Activated CD4-positive, alpha-beta memory T cell treated with anti-CD3 and anti-CD28 coated beads, Interleukin-2, amount 10 ng/mL, durations not matched to agents 7 days and 5 days (primary cell): ENCODE measurements at regions of chr20 and their contacts with region 1.

Region 1: DNA sequence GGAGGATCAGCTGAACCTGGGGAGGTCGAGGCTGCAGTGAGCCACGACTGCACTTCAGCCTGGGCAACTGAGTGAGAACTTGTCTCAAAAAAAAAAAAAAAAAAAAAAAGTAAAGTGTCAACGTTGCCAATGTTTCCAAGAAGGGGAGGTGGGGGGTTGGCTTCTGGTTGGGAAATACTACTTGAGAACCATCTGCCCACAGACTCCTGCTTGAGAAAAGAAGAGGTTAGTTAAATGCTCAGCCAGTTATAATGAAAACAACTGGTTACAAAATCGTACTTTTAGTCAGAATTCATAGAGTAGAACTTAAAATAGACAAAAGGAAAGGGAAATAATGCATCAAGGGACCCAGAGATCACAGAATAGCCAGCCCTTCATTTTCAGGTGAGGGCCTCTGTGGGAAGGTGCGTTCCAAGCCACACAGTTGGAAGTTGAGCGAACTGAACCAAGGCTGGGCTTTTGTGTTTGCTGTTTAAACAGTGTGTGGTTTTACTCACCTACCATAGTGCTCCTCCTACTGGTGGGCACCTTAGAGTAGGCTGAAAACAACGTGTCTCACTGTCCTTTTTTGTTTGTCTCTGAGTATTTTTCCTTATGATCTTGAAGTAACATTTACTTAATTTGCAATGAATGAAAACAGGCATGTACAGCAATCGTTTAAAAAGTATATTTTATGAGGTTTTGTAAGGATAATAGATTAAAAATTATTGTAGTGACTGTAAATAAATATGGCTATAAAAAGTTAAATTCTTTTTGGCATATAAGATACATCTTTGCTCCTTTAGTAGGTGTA is 200.7 kb downstream of the BCAS1 start:
- DNase-seq: peak; percentile 76
- H3K4me3 Mint-ChIP-seq: peak overlapping the region; percentile 22
- H3K27ac Mint-ChIP-seq: peak overlapping the region; percentile 84
- H3K4me1 Mint-ChIP-seq: peaks cover 79% of the 10 kb centered on the region
- H3K27me3 Mint-ChIP-seq: no peaks in the 10 kb centered on the region

Region 2: DNA sequence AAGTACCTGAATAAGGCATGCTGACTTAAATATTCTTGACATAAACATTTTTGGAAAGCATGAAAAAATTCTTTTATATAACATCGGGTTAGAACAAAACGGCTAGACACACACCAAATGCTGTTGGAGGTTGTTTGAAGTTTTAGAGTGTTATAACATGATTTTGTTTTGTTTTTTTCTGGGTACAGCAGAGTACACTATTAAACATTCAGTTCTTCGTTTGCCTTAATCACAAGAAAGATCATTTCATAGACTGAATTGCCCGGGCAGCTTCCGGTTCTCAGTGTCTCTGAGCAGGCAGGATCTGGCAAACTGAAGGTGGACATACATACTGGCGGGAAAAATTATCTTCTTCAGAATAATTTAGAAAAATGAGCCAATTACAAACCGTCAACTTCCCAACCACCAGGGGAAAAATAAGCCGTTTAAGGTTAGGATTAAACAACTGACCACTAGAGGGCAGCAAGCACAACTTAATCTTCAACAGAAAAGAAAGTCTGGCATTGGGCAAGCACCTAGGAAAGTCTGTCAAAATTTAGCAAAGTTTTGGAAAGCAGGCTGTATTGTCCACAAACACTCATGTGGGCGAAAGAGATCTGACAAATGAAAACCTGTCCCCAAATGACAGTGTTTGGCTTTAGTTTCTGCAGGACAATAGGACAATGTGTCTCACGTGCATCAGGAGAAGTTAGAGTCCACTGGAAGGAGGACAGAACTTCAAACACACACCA is 291.0 kb before region 1 on chr20:
- CTCF ChIA-PET with region 1: interaction called, 12 read pairs
- POLR2A ChIA-PET with region 1: interaction called, 12 read pairs
- DNase-seq: peak; percentile 55
- H3K4me3 Mint-ChIP-seq: peak overlapping the region; percentile 78
- H3K27ac Mint-ChIP-seq: peak overlapping the region; percentile 80
- H3K4me1 Mint-ChIP-seq: peaks cover 92% of the 10 kb centered on the region
- H3K27me3 Mint-ChIP-seq: no peaks in the 10 kb centered on the region

Region 3: GRCh38 chr20:53623454-53624211 is 246.0 kb before region 1 on chr20:
- CTCF ChIA-PET with region 1: interaction called, 5 read pairs
- POLR2A ChIA-PET with region 1: interaction called, 15 read pairs
- DNase-seq: peak; percentile 51
- H3K4me3 Mint-ChIP-seq: peak overlapping the region; percentile 60
- H3K27ac Mint-ChIP-seq: peak overlapping the region; percentile 96
- H3K4me1 Mint-ChIP-seq: peaks cover 39% of the 10 kb centered on the region
- H3K27me3 Mint-ChIP-seq: no peaks in the 10 kb centered on the region

Region 4: DNA sequence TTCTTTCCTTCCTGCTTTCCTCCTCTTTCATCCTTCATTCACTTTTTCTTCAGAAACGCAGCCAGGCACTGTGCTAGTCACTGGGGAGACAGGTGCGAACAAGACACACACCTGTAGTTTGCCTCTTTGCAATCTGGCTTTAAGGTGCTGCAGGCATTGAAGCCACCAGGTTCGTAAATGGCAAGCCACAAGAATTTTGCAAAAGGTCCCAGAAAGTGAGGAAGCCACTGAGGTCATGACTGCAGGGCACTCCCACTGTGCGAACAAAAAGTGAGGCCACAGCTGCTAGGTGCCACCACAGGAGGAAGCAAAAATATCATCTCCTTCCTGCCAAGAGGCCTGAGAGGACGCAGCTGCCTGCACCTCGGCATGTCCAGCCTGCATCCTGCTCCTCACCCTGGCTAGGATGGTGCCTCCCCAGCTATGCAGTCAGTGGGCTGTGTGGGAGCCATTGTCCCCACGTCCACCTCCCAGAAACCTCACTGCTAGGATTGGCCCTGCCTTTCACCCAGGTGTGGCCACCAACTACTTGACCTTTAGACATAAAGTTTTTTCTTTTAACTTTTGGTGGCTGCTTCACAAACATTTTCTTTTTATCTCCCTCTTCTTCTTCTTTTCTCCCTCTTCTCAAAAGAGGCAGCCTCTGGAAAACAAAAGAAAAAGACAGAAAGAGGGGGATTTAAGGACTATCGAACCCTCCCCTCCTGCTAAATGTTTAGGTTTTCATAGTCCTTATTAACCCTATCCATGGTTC is 30.1 kb before region 1 on chr20:
- CTCF ChIA-PET with region 1: interaction called, 13 read pairs
- POLR2A ChIA-PET with region 1: interaction called, 20 read pairs
- DNase-seq: peak; percentile 82
- H3K4me3 Mint-ChIP-seq: peak overlapping the region; percentile 72
- H3K27ac Mint-ChIP-seq: peak overlapping the region; percentile 89
- H3K4me1 Mint-ChIP-seq: peaks cover 74% of the 10 kb centered on the region
- H3K27me3 Mint-ChIP-seq: no peaks in the 10 kb centered on the region

Region 5: GRCh38 chr20:53891306-53891944 is 21.8 kb after region 1 on chr20:
- CTCF ChIA-PET with region 1: interaction called, 4 read pairs
- POLR2A ChIA-PET with region 1: interaction called, 10 read pairs
- DNase-seq: no peak
- H3K4me3 Mint-ChIP-seq: no peak overlapping the region
- H3K27ac Mint-ChIP-seq: no peak overlapping the region
- H3K4me1 Mint-ChIP-seq: peaks cover 36% of the 10 kb centered on the region
- H3K27me3 Mint-ChIP-seq: no peaks in the 10 kb centered on the region

Region 6: DNA sequence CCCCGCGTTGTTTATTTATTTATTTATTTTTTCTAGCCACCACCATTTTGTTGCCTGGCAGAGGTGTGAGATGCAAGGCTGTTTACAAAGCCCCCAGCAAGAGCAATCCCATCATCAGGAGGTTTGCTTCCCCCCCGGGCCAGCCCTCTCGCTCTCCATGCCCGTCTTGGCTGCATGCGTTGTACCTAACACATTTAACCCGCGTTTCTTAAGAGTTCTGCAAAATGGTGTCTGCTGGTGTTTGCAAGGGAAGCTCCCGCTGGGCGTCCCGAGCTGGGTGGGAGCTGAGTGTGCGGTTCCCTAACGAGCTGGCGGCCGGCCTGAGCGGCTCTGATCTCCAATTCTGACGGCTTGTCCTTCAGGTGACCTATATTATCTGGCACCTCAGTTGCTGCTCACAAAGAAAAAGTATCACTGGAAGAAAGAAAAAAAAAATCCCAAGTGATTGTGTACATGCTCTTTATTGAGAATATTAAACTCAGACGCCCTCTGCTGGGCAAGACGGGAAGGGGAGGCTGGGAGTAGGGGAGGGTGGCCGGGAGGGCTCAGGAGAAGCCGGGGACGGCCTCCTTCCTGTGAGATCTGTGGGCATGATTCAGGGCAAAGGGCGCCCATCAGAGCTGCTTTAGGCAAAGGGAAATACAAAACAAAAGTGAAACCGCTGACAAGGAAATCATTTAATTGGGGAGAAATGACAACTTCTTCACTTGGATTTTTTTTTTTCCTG is 45.9 kb after region 1 on chr20:
- CTCF ChIA-PET with region 1: interaction called, 30 read pairs
- POLR2A ChIA-PET with region 1: interaction called, 21 read pairs
- DNase-seq: peak; percentile 97
- H3K4me3 Mint-ChIP-seq: peak overlapping the region; percentile 86
- H3K27ac Mint-ChIP-seq: peak overlapping the region; percentile 79
- H3K4me1 Mint-ChIP-seq: peaks cover 39% of the 10 kb centered on the region
- H3K27me3 Mint-ChIP-seq: peaks cover 2% of the 10 kb centered on the region